Common myeloid progenitor, CD34-positive (primary cell): ENCODE measurements at regions of chr2 and their contacts with region 1.

Region 1: DNA sequence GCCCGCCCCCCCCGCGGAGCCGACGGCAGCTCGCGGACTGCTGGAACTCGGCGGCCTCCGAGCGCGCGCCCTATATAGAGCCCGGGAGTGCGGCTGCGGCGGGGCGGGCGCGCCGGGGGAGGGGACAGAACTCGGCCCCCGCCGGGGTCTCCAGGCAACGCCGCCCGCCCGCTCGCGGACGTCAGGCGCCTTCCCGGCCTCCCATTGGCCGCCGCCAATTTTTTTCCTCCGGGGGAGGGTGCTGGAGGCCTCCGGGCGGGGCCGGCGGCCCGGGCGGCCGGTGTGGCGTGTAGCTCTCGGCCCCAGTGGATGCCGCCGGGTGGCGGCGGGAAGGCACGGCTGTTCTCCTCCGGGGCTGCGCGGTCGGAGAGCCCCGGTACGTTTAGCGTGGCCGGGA is at the start of gene ZFP36L2:
- DNase-seq: peak; percentile 94 to 97 (median 96)
- H3K4me3 ChIP-seq: peak within 1 kb of the TSS; percentile 84 to 100 (median 97)
- H3K27ac ChIP-seq: peak within 1 kb of the TSS; percentile 61 to 91
- H3K4me1 ChIP-seq: peaks cover 22 to 29% (median 27%) of the 10 kb centered on the region in 4 experiments
- H3K27me3 ChIP-seq: no peaks in the 10 kb centered on the region

Region 2: GRCh38 chr2:42828487-42829425 is 397.8 kb before region 1 on chr2:
- CTCF ChIA-PET with region 1: interaction called, 46 read pairs
- POLR2A ChIA-PET with region 1: interaction called, 4 read pairs
- DNase-seq: peak; percentile 76 to 85 (median 82)
- H3K4me3 ChIP-seq: no peak overlapping the region
- H3K27ac ChIP-seq: no peak overlapping the region
- H3K4me1 ChIP-seq: peaks cover 0 to 26% (median 22%) of the 10 kb centered on the region in 4 experiments
- H3K27me3 ChIP-seq: no peaks in the 10 kb centered on the region

Region 3: GRCh38 chr2:42944779-42945415 is 281.7 kb before region 1 on chr2:
- CTCF ChIA-PET with region 1: interaction called, 87 read pairs
- POLR2A ChIA-PET with region 1: interaction called, 32 read pairs
- DNase-seq: peak in 1 of 3 donors; percentile 2
- H3K4me3 ChIP-seq: no peak overlapping the region
- H3K27ac ChIP-seq: peak overlapping the region in 1 of 2 experiments; percentile 2
- H3K4me1 ChIP-seq: peaks cover 7 to 68% (median 57%) of the 10 kb centered on the region in 4 experiments
- H3K27me3 ChIP-seq: no peaks in the 10 kb centered on the region

Region 4: GRCh38 chr2:43131024-43131889 is 95.3 kb before region 1 on chr2:
- CTCF ChIA-PET with region 1: interaction called, 178 read pairs
- POLR2A ChIA-PET with region 1: interaction called, 69 read pairs
- DNase-seq: peak; percentile 94 to 100 (median 98)
- H3K4me3 ChIP-seq: peak overlapping the region in 2 of 7 experiments; percentile 4 to 40
- H3K27ac ChIP-seq: peak overlapping the region; percentile 51 to 71
- H3K4me1 ChIP-seq: peaks cover 31 to 91% (median 88%) of the 10 kb centered on the region in 4 experiments
- H3K27me3 ChIP-seq: no peaks in the 10 kb centered on the region

Region 5: DNA sequence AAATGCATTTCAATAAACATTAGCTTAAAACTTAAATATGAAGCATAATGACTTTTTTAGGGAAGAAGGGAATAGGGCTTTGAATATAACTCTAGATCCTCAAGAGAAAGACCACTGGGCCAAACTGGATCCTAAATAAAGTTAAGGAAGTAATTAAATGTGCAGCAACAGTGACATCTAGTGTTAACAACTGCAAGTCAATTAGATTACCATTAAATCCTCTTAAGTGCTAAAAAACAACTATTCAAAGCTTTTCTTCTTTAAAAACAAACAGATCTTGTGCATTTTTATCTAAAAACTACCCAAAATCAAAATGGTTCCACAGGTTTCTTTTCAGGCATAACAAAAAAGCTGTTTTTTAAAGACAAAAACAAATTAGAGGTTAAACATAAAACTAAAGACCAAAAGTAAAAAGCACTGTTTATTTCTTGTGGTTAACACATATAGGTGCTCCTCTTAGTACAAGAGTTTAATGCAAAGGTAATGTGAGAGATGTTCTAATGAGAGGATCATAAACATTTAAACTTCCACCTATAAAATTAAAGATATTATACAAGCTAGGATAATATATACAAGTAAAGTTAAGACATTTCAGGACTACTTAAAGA is 257.9 kb after region 1 on chr2:
- CTCF ChIA-PET with region 1: interaction called, 42 read pairs
- POLR2A ChIA-PET with region 1: interaction called, 4 read pairs
- DNase-seq: peak; percentile 89 to 92 (median 91)
- H3K4me3 ChIP-seq: no peak overlapping the region
- H3K27ac ChIP-seq: no peak overlapping the region
- H3K4me1 ChIP-seq: peaks cover 8 to 29% (median 12%) of the 10 kb centered on the region in 4 experiments
- H3K27me3 ChIP-seq: no peaks in the 10 kb centered on the region

Region 6: DNA sequence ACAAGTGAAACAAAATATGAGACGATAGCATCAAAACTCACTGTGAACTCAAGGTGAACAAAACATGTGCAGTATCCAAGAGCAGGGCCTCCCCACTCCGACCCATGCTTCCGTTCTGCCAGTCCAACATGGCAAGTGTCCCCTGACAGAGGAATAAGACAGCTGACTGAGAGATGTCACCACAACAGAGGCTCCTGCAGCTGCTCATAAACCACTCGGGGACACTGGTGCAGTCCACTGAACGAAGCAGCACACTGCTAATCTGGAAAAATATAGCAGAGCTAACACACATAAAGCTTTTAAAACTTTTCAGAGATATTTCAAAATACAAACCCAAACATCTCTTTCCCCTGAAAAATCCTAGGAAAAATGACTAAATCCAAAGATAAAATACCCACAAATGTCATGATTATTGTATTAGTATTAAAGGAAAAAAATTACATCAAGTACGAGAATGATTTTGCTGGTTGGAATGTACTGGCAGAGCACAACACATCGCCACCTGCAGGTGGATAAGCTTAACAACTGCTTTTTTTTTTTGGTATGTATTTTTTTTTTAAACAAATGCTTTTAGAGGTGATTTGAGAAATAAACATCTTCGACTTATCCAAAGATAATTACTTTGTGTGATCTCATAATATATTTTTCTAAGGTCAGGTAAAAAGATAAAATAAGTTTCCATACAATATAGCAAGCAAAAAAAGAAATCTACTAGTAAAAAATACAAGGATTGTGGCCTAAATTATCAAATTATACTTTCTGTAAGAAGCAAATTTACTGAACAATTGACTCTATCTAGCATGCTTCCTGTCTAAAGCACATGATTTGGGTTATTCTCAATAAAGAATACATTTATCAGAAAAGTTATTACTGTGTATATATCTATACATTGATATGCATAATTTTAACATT is 350.7 kb after region 1 on chr2:
- CTCF ChIA-PET with region 1: interaction called, 11 read pairs
- POLR2A ChIA-PET with region 1: no interaction called
- DNase-seq: peak; percentile 68 to 85 (median 85)
- H3K4me3 ChIP-seq: no peak overlapping the region
- H3K27ac ChIP-seq: no peak overlapping the region
- H3K4me1 ChIP-seq: no peaks in the 10 kb centered on the region
- H3K27me3 ChIP-seq: no peaks in the 10 kb centered on the region